ENCODE measurements at regions of chr14 and their contacts with region 1.

Region 1: GRCh38 chr14:101235335-101236103 is 325.8 kb upstream of the DIO3 start:
- DNase-seq: peak; percentile 91
- H3K4me3 Mint-ChIP-seq: no peak overlapping the region
- H3K27ac Mint-ChIP-seq: no peak overlapping the region
- H3K4me1 Mint-ChIP-seq: peaks cover 11% of the 10 kb centered on the region
- H3K27me3 Mint-ChIP-seq: no peaks in the 10 kb centered on the region
- CTCF ChIP-seq: peak; percentile 59

Region 2: DNA sequence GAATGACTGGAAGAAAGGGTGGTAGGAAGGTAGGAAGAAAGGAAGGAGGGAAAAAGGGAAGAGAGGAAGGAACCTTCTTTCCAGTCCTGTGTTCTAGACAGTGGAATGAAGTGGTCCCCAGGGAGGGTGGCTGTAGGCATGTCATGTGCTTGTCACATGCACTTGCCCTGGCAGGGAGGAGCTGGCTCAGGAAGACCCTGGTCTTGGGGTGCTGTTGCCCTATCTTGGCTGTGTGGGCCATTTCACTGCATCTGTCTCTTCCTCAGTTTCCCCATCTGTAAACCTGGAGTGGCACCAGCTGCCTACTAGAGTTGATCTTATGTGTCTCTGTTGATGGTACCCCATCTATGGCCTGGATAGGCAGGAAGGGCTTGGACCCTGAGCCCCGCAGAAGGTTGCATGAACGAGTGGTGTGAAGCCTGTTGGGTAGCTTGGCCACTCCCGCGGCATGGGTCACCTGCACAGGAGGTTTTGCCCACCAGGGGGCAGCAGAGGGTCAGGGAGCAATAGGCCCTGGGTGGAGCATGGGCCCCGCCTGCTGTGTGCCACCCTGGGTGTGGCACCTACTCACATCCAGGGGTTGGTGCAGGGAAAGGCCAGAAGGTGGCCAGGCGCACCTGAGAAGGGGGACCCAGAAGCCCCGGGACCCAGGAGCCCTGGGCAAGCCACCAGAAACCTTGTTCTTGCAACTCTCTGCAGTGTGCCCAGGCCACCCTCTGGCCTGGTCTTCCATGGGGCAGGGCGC is 384.5 kb before region 1 on chr14:
- CTCF ChIA-PET with region 1: interaction called, 13 read pairs
- intact Hi-C with region 1: loop called (anchors 1 kb)
- DNase-seq: peak; percentile 95
- H3K4me3 Mint-ChIP-seq: no peak overlapping the region
- H3K27ac Mint-ChIP-seq: no peak overlapping the region
- H3K4me1 Mint-ChIP-seq: peaks cover 7% of the 10 kb centered on the region
- H3K27me3 Mint-ChIP-seq: no peaks in the 10 kb centered on the region
- CTCF ChIP-seq: peak; percentile 92

Region 3: GRCh38 chr14:100900837-100901390 is 334.6 kb before region 1 on chr14:
- CTCF ChIA-PET with region 1: interaction called, 4 read pairs
- intact Hi-C with region 1: loop called (anchors 2 kb)
- DNase-seq: peak; percentile 68
- H3K4me3 Mint-ChIP-seq: peak overlapping the region; percentile 37
- H3K27ac Mint-ChIP-seq: peak overlapping the region; percentile 17
- H3K4me1 Mint-ChIP-seq: peaks cover 48% of the 10 kb centered on the region
- H3K27me3 Mint-ChIP-seq: no peaks in the 10 kb centered on the region
- CTCF ChIP-seq: no peak

Region 4: GRCh38 chr14:100979780-100980179 is 255.7 kb before region 1 on chr14:
- CTCF ChIA-PET with region 1: no interaction called
- intact Hi-C with region 1: loop called (anchors 10 kb)
- DNase-seq: no peak
- H3K4me3 Mint-ChIP-seq: no peak overlapping the region
- H3K27ac Mint-ChIP-seq: peak overlapping the region; percentile 84
- H3K4me1 Mint-ChIP-seq: peaks cover 46% of the 10 kb centered on the region
- H3K27me3 Mint-ChIP-seq: no peaks in the 10 kb centered on the region
- CTCF ChIP-seq: no peak

Region 5: DNA sequence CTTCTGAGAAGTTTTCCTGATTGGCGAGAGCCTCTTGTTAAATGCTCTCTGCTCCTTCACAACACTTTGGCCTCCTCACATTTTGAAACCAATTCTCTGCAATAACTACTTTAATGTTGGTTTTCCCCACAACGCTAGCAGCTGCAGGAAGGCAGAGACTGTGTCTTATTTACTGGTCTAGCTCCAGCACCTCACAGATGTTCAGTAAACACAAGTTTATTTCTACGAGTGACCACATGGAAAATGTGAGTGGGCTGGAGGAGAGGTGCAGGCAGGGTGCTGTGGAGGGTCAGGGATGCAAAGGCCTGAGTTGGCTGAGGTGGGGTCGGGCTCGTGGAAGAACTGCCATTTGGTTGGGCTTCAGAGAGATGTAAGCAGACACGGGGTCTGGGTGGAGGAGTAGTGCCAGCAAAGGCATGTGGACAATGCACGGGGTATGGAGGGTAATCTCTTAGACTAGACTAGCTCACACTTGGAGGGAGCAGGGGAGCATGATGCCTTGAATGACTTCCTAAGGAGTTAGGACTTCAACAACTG is 214.6 kb before region 1 on chr14:
- CTCF ChIA-PET with region 1: no interaction called
- intact Hi-C with region 1: no loop called
- DNase-seq: no peak
- H3K4me3 Mint-ChIP-seq: no peak overlapping the region
- H3K27ac Mint-ChIP-seq: no peak overlapping the region
- H3K4me1 Mint-ChIP-seq: no peaks in the 10 kb centered on the region
- H3K27me3 Mint-ChIP-seq: no peaks in the 10 kb centered on the region
- CTCF ChIP-seq: no peak

Region 6: DNA sequence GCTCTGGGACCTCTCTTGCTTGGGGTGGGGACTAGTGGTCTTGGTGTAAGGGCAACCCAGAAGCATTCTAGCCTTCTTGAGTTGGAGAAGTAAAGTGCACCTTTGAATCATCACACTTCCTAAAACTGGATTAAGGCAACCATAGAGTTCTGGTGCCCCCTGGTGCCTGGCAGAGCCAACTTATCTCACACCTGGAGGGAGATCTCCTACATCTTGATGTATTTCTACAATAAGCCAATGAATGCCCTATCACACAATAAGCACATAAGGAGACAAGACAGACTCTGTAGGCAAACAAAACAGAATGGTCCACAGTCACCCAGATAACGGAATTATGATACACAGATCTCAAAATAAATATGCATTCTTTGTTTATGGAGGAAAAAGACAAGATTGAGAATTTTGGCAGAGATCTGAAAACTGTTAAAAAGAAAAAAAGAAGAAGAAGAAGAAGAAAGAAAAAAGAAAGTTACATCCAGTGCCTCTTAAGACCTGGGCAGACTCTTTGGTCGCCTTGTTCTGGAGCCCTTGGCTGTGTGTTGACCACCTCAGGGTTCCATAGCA is 430.1 kb after region 1 on chr14:
- CTCF ChIA-PET with region 1: no interaction called
- intact Hi-C with region 1: loop called (anchors 5 kb)
- DNase-seq: peak; percentile 79
- H3K4me3 Mint-ChIP-seq: no peak overlapping the region
- H3K27ac Mint-ChIP-seq: no peak overlapping the region
- H3K4me1 Mint-ChIP-seq: peaks cover 8% of the 10 kb centered on the region
- H3K27me3 Mint-ChIP-seq: peaks cover 30% of the 10 kb centered on the region
- CTCF ChIP-seq: peak; percentile 33